Motor neuron (in vitro differentiated cells): ENCODE measurements at regions of chr13 and their contacts with region 1.

Region 1: GRCh38 chr13:59677966-59678814 is 485.5 kb downstream of the DIAPH3 start:
- ATAC-seq: peak; percentile 47 to 84 (median 72)
- H3K4me3 ChIP-seq: no peak overlapping the region
- H3K27ac ChIP-seq: no peak overlapping the region
- H3K4me1 ChIP-seq: peaks cover 4 to 5% of the 10 kb centered on the region in 2 donors

Region 2: GRCh38 chr13:59771272-59771671 is 93.1 kb after region 1 on chr13:
- in situ Hi-C with region 1: loop called in 1 of 9 experiments (anchors 10 kb)
- ATAC-seq: peak in 1 of 8 experiments; percentile 23
- H3K4me3 ChIP-seq: no peak overlapping the region
- H3K27ac ChIP-seq: no peak overlapping the region
- H3K4me1 ChIP-seq: peaks cover 0 to 13% of the 10 kb centered on the region in 2 donors

Region 3: DNA sequence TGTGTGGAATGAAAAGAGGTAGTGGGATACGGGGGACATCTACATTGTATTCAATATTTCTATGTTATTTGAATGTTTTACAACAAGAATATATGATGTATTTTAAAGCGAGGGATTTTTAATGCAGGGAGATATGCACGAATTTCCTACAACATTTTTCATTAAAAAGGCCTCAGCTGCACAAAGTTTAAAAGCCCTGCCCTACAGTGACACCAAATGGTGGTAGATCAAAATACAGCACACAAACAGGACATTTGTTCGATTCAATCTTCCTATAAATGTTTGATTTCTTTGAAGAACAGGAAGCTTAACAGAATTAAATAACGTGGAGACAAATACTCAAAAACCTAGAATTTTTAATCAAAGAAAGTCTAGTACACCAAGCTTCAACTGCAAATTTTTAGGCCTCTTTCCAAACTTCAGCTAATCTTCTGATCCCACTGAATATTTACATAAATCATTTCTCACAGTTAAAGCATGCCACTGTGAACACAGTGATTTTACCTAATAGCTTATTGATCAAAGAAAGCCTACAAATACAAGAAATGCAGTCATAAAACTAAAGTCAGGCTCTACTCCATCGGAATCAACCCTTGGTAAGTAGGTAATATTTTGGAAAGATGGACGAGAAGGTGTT is 228.3 kb after region 1 on chr13:
- in situ Hi-C with region 1: loop called in 3 of 9 experiments (anchors 10 to 25 kb)
- ATAC-seq: peak in 3 of 8 experiments; percentile 46 to 69 (median 61)
- H3K4me3 ChIP-seq: no peak overlapping the region
- H3K27ac ChIP-seq: no peak overlapping the region
- H3K4me1 ChIP-seq: no peaks in the 10 kb centered on the region

Region 4: DNA sequence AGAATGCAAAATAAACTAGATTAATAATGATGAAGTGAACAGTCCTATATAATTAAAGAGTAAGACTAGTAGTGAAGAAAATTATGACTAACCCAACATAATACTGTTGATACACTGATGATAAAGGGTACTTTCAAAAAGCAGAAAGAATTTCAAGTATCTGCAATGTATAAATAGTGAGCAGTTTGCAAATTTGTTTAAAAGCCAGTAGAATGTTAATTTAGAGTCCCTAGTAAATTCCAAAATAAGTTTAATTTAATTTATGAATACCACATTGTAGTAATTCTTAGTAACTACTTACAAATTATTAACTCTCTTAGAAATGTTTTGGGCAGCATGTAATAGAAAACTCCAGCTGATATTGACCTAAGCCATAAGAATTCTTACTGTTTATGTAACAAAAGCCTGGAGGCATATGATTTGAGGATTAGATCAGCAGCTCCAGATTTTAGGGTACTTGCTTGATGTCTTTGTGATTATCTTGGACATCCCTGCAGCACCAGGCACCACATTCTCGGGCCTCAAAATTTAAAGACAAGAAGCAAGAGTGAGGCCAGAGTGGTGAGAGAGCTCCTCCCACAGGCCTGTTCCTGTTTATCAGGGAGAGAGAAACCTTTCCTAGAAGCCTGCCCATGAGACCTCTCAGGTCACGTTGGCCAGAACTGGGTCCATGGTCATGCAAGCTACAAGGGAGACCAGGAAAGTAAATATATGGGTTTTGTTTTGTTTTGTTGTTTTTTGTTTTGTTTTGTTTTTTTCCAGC is 651.2 kb after region 1 on chr13:
- in situ Hi-C with region 1: loop called in 2 of 9 experiments (anchors 25 kb)
- ATAC-seq: peak in 5 of 8 experiments; percentile 58 to 91 (median 79)
- H3K4me3 ChIP-seq: no peak overlapping the region
- H3K27ac ChIP-seq: no peak overlapping the region
- H3K4me1 ChIP-seq: no peaks in the 10 kb centered on the region